Breast epithelium (tissue), 4 donors: ENCODE measurements at regions of chr10 and their contacts with region 1.

Region 1: GRCh38 chr10:13659897-13660550 is 73.3 kb downstream of the PRPF18 start:
- DNase-seq: peak; percentile 33 to 62
- H3K4me3 ChIP-seq: no peak overlapping the region
- H3K27ac ChIP-seq: peak overlapping the region in 1 of 2 donors; percentile 30
- H3K4me1 ChIP-seq: no peaks in the 10 kb centered on the region
- H3K27me3 ChIP-seq: no peaks in the 10 kb centered on the region
- CTCF ChIP-seq: peak; percentile 82 to 92 (median 90)
- POLR2A ChIP-seq: no peak

Region 2: GRCh38 chr10:13732465-13732881 is 72.4 kb after region 1 on chr10:
- intact Hi-C with region 1: no loop called
- DNase-seq: no peak
- H3K4me3 ChIP-seq: no peak overlapping the region
- H3K27ac ChIP-seq: no peak overlapping the region
- H3K4me1 ChIP-seq: no peaks in the 10 kb centered on the region
- H3K27me3 ChIP-seq: no peaks in the 10 kb centered on the region
- CTCF ChIP-seq: no peak
- POLR2A ChIP-seq: no peak

Region 3: DNA sequence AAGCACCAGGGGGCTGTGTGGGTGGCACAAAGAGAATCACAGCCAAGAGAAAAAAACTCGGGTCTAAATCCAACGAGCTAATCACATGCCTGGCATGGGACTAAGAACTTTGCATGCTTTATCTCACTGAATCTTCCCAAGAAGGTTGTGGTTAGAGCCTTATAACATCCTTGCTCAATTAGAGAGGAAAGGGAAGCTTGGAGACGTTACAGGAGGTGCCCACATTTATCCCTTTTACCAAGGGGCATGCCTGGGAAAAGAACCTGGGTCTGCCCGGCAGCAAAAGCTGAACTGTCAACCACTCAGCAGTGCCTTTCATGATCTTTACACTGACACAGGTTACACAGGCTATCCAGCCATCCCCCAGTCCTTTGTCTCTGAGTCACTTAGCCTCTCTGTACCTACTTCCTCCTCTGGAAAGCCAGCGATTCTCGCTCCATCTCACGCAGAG is 116.9 kb after region 1 on chr10:
- intact Hi-C with region 1: loop called (anchors 5 kb)
- DNase-seq: no peak
- H3K4me3 ChIP-seq: no peak overlapping the region
- H3K27ac ChIP-seq: no peak overlapping the region
- H3K4me1 ChIP-seq: no peaks in the 10 kb centered on the region
- H3K27me3 ChIP-seq: no peaks in the 10 kb centered on the region
- CTCF ChIP-seq: no peak
- POLR2A ChIP-seq: no peak

Region 4: DNA sequence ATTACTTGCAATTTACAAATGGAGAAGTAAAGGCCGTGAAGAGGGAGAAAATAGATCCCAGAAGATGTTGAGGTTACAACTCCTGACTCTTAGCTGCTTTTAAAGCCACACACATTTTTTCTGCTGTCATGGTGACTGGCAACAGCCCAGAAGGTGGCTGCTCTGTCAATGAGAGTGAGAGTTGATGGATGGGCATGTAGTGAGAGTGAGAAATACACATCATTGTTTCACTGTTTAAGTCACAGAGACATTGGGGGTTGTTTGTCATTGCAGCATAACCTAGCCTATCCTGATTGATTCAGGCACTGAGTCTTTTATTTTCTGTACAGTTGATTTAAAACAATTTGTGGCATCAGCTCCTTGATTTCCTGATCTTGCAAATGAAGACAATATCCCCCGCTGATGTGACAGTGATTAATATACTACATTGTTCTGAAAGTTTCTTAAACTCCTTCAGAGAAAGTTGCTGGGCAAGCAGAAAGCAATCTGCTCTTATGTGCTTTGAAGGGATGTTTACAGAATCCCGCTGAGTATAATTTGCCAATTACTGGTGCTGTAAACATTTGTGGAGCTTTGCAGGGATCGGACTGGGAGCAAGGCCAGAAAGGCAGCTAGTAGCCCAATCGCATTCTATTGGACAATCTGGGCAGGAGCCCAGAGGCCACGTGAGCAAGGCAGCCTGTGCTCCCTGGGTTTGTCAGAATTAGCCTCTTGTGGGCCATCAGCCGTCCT is 156.3 kb after region 1 on chr10:
- intact Hi-C with region 1: no loop called
- DNase-seq: peak; percentile 27 to 67
- H3K4me3 ChIP-seq: no peak overlapping the region
- H3K27ac ChIP-seq: no peak overlapping the region
- H3K4me1 ChIP-seq: no peaks in the 10 kb centered on the region
- H3K27me3 ChIP-seq: peaks cover 0 to 5% of the 10 kb centered on the region in 2 donors
- CTCF ChIP-seq: no peak
- POLR2A ChIP-seq: no peak